Dendritic cell treated with granulocyte-macrophage colony-stimulating factor and Interleukin-4, amounts not matched to agents 40 ng/mL and 50 ng/mL, for 4 days (primary cell): ENCODE measurements at regions of chr2 and their contacts with region 1.

Region 1: GRCh38 chr2:139045524-139045923 is 265.3 kb upstream of the NXPH2 start:
- H3K4me3 Mint-ChIP-seq: no peak overlapping the region
- H3K27ac Mint-ChIP-seq: no peak overlapping the region
- H3K4me1 Mint-ChIP-seq: no peaks in the 10 kb centered on the region
- H3K27me3 Mint-ChIP-seq: no peaks in the 10 kb centered on the region

Region 2: DNA sequence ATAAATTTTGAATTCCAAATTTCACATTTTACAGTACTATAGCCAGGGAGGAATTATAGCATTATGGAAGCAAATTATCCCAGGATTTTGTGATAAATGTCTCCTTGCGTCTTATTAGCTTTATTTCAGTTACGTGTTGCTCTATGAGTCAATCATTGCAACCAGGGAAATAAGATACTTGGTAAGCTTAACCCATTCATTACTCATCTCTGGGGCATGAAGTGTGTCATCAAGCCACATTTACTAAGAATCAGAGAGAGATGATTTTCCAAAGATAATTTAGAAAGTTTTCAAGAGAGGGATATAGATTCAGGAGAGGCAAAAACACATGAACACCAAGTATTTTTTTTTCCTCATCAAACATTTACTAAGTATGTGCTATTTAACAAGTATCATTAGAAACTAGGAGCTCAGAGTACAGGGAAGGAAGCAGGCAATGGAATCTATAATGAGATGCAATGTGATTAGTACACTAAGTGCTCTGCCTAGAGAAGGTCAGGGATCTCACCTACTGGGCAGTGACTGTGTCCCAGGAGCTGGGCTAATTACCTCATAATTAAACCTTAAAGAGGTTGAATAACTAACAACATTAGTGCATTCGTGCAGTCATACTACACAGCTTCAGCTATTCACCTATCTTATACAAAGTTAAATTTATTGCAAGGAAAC is 47.5 kb before region 1 on chr2:
- intact Hi-C with region 1: loop called (anchors 2 kb)
- H3K4me3 Mint-ChIP-seq: no peak overlapping the region
- H3K27ac Mint-ChIP-seq: no peak overlapping the region
- H3K4me1 Mint-ChIP-seq: no peaks in the 10 kb centered on the region
- H3K27me3 Mint-ChIP-seq: no peaks in the 10 kb centered on the region